B cell (primary cell): ENCODE measurements at regions of chr19 and their contacts with region 1.

Region 1: DNA sequence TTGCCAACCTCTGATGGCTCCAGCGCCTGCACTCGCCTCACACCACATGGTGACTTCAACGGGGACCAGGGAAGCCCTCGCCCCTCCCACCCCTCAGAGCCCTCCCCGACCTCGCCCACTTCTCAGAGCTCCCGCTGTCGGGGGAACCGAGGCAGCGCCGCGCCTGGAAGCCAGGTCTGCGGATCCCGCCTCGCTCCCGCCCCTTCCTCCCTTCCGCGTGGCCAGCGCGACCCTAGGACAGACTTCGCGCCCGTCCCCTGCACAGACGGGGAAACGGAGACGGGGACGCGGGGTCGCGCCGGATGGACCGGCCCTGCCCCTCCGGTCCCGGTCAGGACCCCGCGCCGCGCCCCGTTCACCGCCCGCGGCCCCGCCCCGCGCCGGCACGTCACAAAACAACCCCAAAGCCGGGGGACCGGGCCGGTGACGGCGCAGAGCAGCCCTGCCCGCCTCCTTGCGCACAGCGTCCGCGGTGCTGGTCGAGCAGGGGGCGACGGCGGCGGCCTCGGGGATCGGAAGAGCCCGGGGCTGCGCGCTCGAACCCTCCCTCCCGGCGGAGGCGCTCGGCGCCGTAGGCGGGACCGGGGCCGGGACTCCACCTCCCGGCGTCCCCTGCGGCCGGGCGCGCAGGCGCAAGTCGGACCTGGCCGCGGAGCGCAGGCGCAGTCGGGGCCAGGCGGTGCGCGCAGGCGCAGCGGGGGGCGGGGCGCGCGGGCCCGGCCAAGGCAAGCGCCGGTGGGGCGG is 379 bp upstream of the CDC34 start:
- DNase-seq: peak; percentile 94
- ATAC-seq: peak; percentile 80
- H3K4me3 ChIP-seq: peak overlapping the region in 4 of 5 experiments; percentile 73 to 83 (median 76)
- H3K4me3 Mint-ChIP-seq: peak overlapping the region; percentile 89
- H3K27ac ChIP-seq: peak overlapping the region; percentile 41 to 79
- H3K27ac Mint-ChIP-seq: peak overlapping the region; percentile 88
- H3K4me1 ChIP-seq: peaks cover 12 to 25% of the 10 kb centered on the region in 2 donors
- H3K4me1 Mint-ChIP-seq: peaks cover 13% of the 10 kb centered on the region
- H3K27me3 ChIP-seq: no peaks in the 10 kb centered on the region
- H3K27me3 Mint-ChIP-seq: peaks cover 6% of the 10 kb centered on the region
- CTCF ChIP-seq: no peak

Region 2: DNA sequence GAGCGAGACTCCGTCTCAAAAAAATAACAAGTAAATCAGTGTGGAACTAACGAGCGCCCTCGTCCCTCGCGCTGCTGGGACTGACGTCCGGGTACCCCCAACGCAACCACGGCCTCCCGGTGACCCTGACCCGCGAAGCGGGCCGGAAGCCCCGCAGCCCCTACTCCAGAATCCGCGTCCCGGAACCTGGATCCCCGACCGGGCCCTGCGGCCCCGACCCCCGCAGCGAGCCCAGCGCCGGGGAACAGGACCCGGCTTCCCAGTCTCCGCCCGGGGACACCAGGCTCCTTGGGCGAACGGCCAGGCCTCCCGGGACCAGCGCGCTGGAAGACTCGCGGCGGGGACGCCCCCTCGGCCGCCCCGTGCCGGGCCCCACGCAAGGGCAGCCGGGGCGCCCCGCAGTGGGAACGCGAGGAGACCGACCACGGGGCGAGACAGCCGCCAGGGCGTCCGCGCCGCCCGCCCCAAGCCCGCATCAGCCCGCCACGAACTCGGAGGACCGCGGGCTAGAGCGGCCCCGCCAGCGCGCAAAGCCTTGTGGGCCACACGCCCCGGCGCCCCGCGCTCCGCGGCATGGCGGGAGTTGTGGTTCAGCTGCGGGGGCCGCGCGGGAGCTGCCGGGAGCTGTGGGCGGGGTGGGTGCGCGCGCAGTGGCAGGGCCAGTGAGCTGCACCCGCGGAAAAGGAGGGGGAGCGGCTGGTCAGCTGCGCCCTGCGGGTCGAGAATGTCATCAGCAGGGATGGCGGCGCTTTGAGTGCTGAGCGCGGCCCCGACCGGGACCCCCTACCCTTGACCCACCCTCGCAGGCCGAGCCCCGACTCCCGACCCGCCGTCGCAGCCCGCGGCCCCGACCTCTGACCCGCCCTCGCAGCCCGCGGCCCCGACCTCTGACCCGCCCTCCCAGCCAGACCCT is 42.4 kb before region 1 on chr19:
- CTCF ChIA-PET with region 1: interaction called, 3 read pairs
- POLR2A ChIA-PET with region 1: no interaction called
- intact Hi-C with region 1: loop called (anchors 1 kb)
- DNase-seq: peak; percentile 93
- ATAC-seq: peak; percentile 94
- H3K4me3 ChIP-seq: peak overlapping the region; percentile 51 to 98 (median 79)
- H3K4me3 Mint-ChIP-seq: peak overlapping the region; percentile 80
- H3K27ac ChIP-seq: peak overlapping the region; percentile 86 to 89
- H3K27ac Mint-ChIP-seq: peak overlapping the region; percentile 88
- H3K4me1 ChIP-seq: peaks cover 0 to 12% of the 10 kb centered on the region in 2 donors
- H3K4me1 Mint-ChIP-seq: peaks cover 2% of the 10 kb centered on the region
- H3K27me3 ChIP-seq: peaks cover 0 to 18% (median 8%) of the 10 kb centered on the region in 4 experiments
- H3K27me3 Mint-ChIP-seq: peaks cover 11% of the 10 kb centered on the region
- CTCF ChIP-seq: no peak

Region 3: GRCh38 chr19:497861-498510 is 33.2 kb before region 1 on chr19:
- CTCF ChIA-PET with region 1: no interaction called
- POLR2A ChIA-PET with region 1: interaction called, 12 read pairs
- intact Hi-C with region 1: no loop called
- DNase-seq: no peak
- ATAC-seq: peak; percentile 19
- H3K4me3 ChIP-seq: no peak overlapping the region
- H3K4me3 Mint-ChIP-seq: no peak overlapping the region
- H3K27ac ChIP-seq: no peak overlapping the region
- H3K27ac Mint-ChIP-seq: no peak overlapping the region
- H3K4me1 ChIP-seq: peaks cover 16 to 22% of the 10 kb centered on the region in 2 donors
- H3K4me1 Mint-ChIP-seq: peaks cover 10% of the 10 kb centered on the region
- H3K27me3 ChIP-seq: peaks cover 0 to 46% (median 14%) of the 10 kb centered on the region in 4 experiments
- H3K27me3 Mint-ChIP-seq: peaks cover 12% of the 10 kb centered on the region
- CTCF ChIP-seq: no peak